ENCODE measurements at regions of chr19 and their contacts with region 1.

Region 1: DNA sequence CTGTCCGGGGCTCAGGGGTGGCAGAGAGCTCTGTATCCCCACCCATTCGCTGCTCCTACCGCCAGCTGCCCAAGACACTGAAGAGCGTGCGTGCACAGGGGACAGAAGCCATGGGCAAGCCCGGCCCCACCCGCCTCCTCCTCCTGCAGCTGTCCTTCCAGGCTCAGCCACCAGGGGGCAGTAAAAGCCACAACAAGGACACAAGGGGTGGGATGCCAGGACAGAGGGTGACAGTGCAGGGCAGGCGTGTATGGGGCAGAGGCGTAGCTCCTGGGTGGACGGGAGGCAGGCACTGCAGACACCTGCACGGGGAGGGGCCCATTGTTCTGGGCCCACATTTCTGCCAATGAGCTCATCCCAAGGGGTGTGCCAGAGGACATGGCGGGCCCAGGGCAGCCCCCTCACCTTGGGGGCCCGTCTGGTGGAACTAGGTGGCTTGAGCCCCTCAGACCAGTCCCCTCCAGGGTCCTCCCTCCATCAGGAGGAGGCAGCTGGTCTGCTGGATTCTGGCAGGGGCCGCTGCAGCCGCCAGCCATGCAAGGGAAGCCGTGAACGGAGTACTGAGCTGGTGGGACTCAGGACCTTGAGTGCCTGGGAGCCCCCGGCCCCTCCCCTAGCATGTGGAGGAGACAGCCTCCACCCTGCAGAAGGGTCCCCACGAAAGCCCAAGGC is 61.1 kb downstream of the MLLT1 start:
- DNase-seq: no peak
- H3K4me3 ChIP-seq: no peak overlapping the region
- H3K27ac ChIP-seq: peak overlapping the region; percentile 44
- H3K4me1 ChIP-seq: peaks cover 55% of the 10 kb centered on the region
- H3K27me3 ChIP-seq: no peaks in the 10 kb centered on the region
- CTCF ChIP-seq: peak; percentile 84 to 98 (median 97)
- POLR2A ChIP-seq: no peak

Region 2: GRCh38 chr19:6279931-6280591 is 61.4 kb after region 1 on chr19 and contains the start of gene MLLT1:
- intact Hi-C with region 1: loop called (anchors 5 kb)
- DNase-seq: peak in 1 of 2 donors; percentile 94
- H3K4me3 ChIP-seq: peak within 1 kb of the TSS; percentile 68 to 84
- H3K27ac ChIP-seq: peak within 1 kb of the TSS; percentile 89
- H3K4me1 ChIP-seq: peaks cover 42% of the 10 kb centered on the region
- H3K27me3 ChIP-seq: no peaks in the 10 kb centered on the region
- CTCF ChIP-seq: peak; percentile 11 to 76 (median 45)
- POLR2A ChIP-seq: peak in 1 of 2 donors; percentile 19
- total RNA-seq, gene MLLT1: 25.5 TPM

Region 3: GRCh38 chr19:6297202-6297601 is 78.6 kb after region 1 on chr19:
- intact Hi-C with region 1: loop called (anchors 5 kb)
- DNase-seq: no peak
- H3K4me3 ChIP-seq: no peak overlapping the region
- H3K27ac ChIP-seq: no peak overlapping the region
- H3K4me1 ChIP-seq: no peaks in the 10 kb centered on the region
- H3K27me3 ChIP-seq: no peaks in the 10 kb centered on the region
- CTCF ChIP-seq: no peak
- POLR2A ChIP-seq: no peak

Region 4: DNA sequence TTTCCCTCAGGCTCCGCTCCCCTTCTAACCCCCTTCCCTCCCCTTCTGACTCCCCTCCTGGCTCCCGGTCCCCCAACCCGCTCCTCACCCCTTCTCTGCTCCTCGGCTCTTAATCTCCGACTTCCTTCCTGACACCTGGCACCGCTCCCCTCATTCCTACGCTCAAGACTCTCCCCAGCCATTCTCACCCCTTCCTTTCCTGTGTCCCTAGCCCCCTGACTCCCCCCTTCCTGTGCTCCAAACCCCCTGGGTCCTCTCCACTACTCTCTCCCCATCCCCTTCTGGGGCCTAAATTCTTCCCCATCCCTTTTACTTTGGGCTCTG is 143.4 kb after region 1 on chr19:
- intact Hi-C with region 1: loop called (anchors 10 kb)
- DNase-seq: no peak
- H3K4me3 ChIP-seq: peak overlapping the region; percentile 64 to 82
- H3K27ac ChIP-seq: peak overlapping the region; percentile 87
- H3K4me1 ChIP-seq: peaks cover 16% of the 10 kb centered on the region
- H3K27me3 ChIP-seq: no peaks in the 10 kb centered on the region
- CTCF ChIP-seq: no peak
- POLR2A ChIP-seq: no peak

Measured in vagina (tissue), 2 donors.